Mammary epithelial cell (primary cell): ENCODE measurements at regions of chr12 and their contacts with region 1.

Region 1: GRCh38 chr12:48681738-48682532 is at the start of gene KANSL2:
- DNase-seq: peak; percentile 99
- H3K4me3 ChIP-seq: peak within 1 kb of the TSS; percentile 95 to 97 (median 95)
- H3K27ac ChIP-seq: peak within 1 kb of the TSS; percentile 82
- H3K4me1 ChIP-seq: peaks cover 32% of the 10 kb centered on the region
- H3K27me3 ChIP-seq: no peaks in the 10 kb centered on the region
- CTCF ChIP-seq: no peak
- total RNA-seq, gene KANSL2: 36.0 to 38.3 TPM

Region 2: GRCh38 chr12:48640854-48641253 is 41.1 kb before region 1 on chr12:
- CTCF ChIA-PET with region 1: no interaction called
- dilution Hi-C with region 1: no loop called
- in situ Hi-C with region 1: no loop called
- intact Hi-C with region 1: no loop called
- DNase-seq: no peak
- H3K4me3 ChIP-seq: no peak overlapping the region
- H3K27ac ChIP-seq: no peak overlapping the region
- H3K4me1 ChIP-seq: no peaks in the 10 kb centered on the region
- H3K27me3 ChIP-seq: no peaks in the 10 kb centered on the region
- CTCF ChIP-seq: no peak

Region 3: DNA sequence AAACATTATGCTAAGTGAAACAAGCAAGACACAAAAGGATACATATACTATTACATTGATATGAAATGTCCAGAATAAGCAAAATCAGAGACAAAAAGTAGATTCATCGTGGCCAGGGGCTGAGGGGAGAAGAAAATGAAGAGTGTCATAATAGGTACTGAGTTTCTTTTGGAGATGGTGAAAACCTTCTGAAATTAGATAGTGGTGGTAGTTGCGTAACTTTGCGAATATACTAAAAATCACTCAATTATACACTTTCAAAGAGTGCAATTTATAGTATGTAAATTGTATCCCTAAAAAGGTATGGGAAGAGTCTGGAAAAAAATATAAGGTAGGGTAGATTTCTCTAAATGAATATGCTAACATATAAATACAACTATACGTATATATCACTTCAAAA is 22.1 kb before region 1 on chr12:
- CTCF ChIA-PET with region 1: no interaction called
- dilution Hi-C with region 1: no loop called
- in situ Hi-C with region 1: no loop called
- intact Hi-C with region 1: no loop called
- DNase-seq: no peak
- H3K4me3 ChIP-seq: no peak overlapping the region
- H3K27ac ChIP-seq: no peak overlapping the region
- H3K4me1 ChIP-seq: no peaks in the 10 kb centered on the region
- H3K27me3 ChIP-seq: no peaks in the 10 kb centered on the region
- CTCF ChIP-seq: no peak

Region 4: GRCh38 chr12:48716493-48717251 is 34.7 kb after region 1 on chr12 and contains the start of gene CCNT1:
- CTCF ChIA-PET with region 1: no interaction called
- dilution Hi-C with region 1: no loop called
- in situ Hi-C with region 1: no loop called
- intact Hi-C with region 1: loop called (anchors 1 kb)
- DNase-seq: peak; percentile 100
- H3K4me3 ChIP-seq: peak within 1 kb of the TSS; percentile 84 to 99 (median 88)
- H3K27ac ChIP-seq: peak within 1 kb of the TSS; percentile 92
- H3K4me1 ChIP-seq: peaks cover 21% of the 10 kb centered on the region
- H3K27me3 ChIP-seq: no peaks in the 10 kb centered on the region
- CTCF ChIP-seq: peak in 1 of 2 donors; percentile 35
- total RNA-seq, gene CCNT1: 31.5 to 49.1 TPM

Region 5: DNA sequence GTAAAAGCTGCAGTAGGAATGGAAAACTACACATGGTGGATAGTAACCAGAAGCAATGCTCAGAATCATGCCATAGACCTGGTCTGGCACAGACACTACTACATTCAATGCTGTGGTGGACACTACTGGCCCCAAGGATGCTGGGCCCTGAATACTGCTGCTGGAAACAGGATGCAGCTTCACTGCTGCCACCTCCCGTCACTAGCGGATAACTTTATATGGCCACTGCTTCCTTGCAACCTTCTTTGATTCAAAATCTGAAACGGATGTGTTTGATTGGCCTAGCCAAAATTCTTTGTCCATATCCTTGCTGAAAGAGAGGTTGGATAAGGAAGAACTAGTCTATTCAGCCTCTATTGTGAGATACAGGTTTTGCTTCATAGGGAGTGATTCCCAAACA is 76.3 kb after region 1 on chr12:
- CTCF ChIA-PET with region 1: interaction called, 27 read pairs
- dilution Hi-C with region 1: no loop called
- in situ Hi-C with region 1: no loop called
- intact Hi-C with region 1: no loop called
- DNase-seq: no peak
- H3K4me3 ChIP-seq: no peak overlapping the region
- H3K27ac ChIP-seq: no peak overlapping the region
- H3K4me1 ChIP-seq: no peaks in the 10 kb centered on the region
- H3K27me3 ChIP-seq: no peaks in the 10 kb centered on the region
- CTCF ChIP-seq: no peak

Region 6: DNA sequence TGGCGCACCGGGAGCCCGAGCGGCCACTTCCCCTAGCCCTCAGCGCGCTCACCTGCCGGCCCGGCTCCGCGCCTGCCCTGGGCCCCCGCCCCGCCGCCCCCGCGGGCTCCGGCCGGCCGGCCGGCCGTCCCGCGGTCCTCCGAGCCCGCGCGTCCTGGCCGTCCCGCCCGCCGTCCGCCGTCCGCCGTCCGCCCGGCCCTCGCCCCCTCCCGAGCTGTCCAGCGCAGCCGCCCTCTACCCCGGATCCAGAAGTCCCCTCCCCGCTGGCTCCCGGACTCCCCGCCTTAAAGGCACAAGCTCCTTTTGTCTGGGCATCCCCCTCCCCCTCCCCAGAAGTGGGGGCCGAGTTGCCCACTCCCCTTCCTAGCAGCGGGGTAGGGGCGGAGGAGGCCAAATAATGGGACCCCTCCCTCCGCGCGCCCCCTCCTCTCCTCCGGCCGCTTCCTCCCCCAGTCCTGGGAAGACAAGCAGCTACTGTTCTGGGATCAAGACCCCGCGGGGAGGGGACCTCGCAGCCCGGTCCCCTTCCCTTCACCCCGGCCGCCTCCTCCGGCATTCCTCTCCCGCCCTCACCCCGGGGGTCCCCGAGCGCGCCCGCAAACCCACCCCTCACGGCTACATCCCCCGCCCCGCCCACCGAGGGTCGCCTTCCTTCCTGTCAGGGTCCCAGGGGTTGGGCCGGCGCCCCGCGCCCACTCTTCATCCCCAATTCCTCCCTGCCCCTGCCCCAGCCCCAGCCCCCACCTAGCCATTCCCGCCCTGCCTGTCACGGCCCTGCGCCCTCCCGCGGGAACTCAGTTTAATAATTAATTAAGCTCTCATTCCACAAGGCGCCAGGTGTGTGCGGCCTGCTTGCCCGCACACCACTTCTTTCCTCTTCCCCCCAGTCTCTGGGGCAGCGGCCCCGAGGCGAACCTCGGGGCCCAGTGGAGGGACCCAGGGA is 107.2 kb after region 1 on chr12 and contains the start of gene ADCY6:
- CTCF ChIA-PET with region 1: no interaction called
- dilution Hi-C with region 1: loop called (anchors 5 kb)
- in situ Hi-C with region 1: no loop called
- intact Hi-C with region 1: loop called (anchors 2 kb)
- DNase-seq: peak; percentile 47
- H3K4me3 ChIP-seq: peak within 1 kb of the TSS; percentile 79 to 97 (median 90)
- H3K27ac ChIP-seq: peak within 1 kb of the TSS; percentile 49
- H3K4me1 ChIP-seq: peaks cover 10% of the 10 kb centered on the region
- H3K27me3 ChIP-seq: no peaks in the 10 kb centered on the region
- CTCF ChIP-seq: no peak
- total RNA-seq, gene ADCY6: 30.5 to 42.2 TPM